Caco-2 (cell line): ENCODE measurements at regions of chr3 and their contacts with region 1.

Region 1: DNA sequence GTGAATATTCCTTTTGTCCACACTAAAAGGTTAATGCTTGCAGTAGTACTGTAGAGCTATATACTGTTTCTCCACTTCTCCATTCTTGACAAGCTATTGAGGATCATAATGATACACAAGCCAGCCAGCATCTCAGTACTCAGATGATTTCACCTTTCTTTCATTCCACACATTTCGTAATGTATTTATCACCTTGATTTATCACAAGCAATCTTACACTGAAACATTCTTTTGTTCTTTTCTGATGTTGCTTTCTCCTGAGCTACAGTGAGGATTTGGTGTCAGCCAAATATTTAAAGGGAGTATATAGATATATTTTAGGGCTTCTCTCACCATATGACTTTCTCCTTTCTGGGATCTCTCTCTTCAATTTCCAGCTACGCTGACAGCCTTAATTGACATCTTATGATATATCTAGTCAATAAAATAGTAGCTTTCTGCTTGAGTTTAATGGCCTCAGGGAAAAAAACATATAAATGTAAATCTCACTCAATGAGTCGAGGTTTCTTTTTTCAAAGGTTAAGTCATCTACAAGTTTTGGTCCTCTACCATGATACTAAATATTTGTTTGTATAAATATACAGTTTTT is 1327.0 kb downstream of the NSUN3 start:
- DNase-seq: no peak
- H3K4me3 ChIP-seq: no peak overlapping the region
- H3K4me3 Mint-ChIP-seq: no peak overlapping the region
- H3K27ac Mint-ChIP-seq: no peak overlapping the region
- H3K4me1 ChIP-seq: no peaks in the 10 kb centered on the region
- H3K4me1 Mint-ChIP-seq: no peaks in the 10 kb centered on the region
- H3K27me3 ChIP-seq: no peaks in the 10 kb centered on the region
- H3K27me3 Mint-ChIP-seq: no peaks in the 10 kb centered on the region
- CTCF ChIP-seq: no peak

Region 2: DNA sequence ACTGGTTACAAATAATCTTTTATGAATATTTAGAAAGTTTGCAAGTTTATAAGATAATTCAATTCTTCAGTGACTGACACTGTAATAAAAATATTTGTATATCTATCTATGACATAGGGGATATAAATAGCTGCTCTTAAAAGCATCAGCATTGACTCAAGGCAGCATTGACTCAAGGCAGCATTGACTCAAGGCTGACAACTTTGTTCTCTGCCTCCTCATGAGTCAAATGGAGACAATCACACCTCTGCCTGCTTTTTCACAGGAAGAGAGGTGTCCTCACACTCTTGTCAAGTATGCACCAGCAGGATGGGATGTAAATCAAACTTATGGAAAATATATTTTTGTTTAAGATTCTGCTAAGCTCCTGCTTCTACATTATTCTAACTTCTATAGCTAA is 153.9 kb before region 1 on chr3:
- CTCF ChIA-PET with region 1: no interaction called
- POLR2A ChIA-PET with region 1: interaction called, 12 read pairs
- intact Hi-C with region 1: no loop called
- DNase-seq: no peak
- H3K4me3 ChIP-seq: no peak overlapping the region
- H3K4me3 Mint-ChIP-seq: no peak overlapping the region
- H3K27ac Mint-ChIP-seq: no peak overlapping the region
- H3K4me1 ChIP-seq: no peaks in the 10 kb centered on the region
- H3K4me1 Mint-ChIP-seq: no peaks in the 10 kb centered on the region
- H3K27me3 ChIP-seq: no peaks in the 10 kb centered on the region
- H3K27me3 Mint-ChIP-seq: no peaks in the 10 kb centered on the region
- CTCF ChIP-seq: no peak